ENCODE measurements at regions of chr5 and their contacts with region 1.

Region 1: DNA sequence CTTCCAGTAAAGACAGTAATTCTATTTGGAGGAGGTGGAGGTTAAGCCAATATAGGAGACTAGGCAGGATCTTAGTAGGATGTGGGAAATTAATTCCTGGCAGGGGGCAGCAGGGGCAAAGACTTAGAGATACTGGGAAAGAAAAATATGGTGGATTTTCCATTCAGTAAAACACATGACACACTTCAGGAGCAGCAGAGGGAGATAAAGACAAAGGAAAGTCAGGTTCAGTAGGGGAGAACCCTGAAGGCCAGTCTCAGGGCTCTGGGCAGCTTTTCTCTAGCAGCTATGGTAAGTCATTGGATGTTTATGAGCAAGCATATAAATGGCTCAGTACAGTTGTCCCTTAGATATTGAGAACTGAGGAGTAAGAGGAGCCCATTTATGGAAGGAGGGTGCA is 105.5 kb downstream of the PJA2 start:
- DNase-seq: no peak
- H3K4me3 ChIP-seq: no peak overlapping the region
- H3K27ac ChIP-seq: no peak overlapping the region
- H3K4me1 ChIP-seq: no peaks in the 10 kb centered on the region
- H3K27me3 ChIP-seq: peaks cover 2% of the 10 kb centered on the region
- CTCF ChIP-seq: no peak

Region 2: GRCh38 chr5:109230369-109230768 is 73.9 kb before region 1 on chr5:
- CTCF ChIA-PET with region 1: no interaction called
- dilution Hi-C with region 1: loop called (anchors 5 kb)
- in situ Hi-C with region 1: no loop called
- intact Hi-C with region 1: no loop called
- DNase-seq: no peak
- H3K4me3 ChIP-seq: no peak overlapping the region
- H3K27ac ChIP-seq: no peak overlapping the region
- H3K4me1 ChIP-seq: no peaks in the 10 kb centered on the region
- H3K27me3 ChIP-seq: no peaks in the 10 kb centered on the region
- CTCF ChIP-seq: no peak

Region 3: DNA sequence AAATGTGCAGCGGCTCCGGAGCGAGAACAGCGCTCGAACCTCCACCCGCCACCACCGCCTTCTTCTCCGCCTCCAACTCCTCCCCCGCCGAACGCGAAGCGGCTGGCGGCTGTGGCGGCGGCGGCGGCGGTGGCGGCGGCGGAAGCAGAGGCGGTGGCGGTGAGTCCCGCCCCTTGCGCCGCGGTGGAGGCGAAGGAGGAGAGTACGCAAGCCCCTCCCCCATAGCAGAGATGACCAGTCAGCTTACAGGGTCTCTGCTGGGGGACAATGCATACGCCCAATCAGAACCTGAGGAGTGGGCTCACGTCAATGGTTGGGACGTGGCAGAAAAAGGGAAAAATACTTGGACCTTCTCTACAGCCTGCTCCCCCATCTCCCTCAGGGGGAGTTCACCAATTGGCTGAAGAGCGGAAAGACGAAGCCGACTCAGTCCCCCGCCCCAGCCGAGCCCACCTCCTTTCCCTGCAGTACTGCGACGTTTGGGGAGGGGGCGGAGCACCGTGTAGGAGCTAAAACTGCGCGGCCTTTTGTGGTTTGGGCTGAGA is 105.6 kb after region 1 on chr5 and contains the start of gene PJA2:
- CTCF ChIA-PET with region 1: no interaction called
- dilution Hi-C with region 1: no loop called
- in situ Hi-C with region 1: no loop called
- intact Hi-C with region 1: no loop called
- DNase-seq: peak; percentile 99
- H3K4me3 ChIP-seq: peak within 1 kb of the TSS; percentile 60 to 95 (median 95)
- H3K27ac ChIP-seq: peak within 1 kb of the TSS; percentile 97
- H3K4me1 ChIP-seq: peaks cover 21% of the 10 kb centered on the region
- H3K27me3 ChIP-seq: no peaks in the 10 kb centered on the region
- CTCF ChIP-seq: peak in 1 of 2 donors; percentile 36
- total RNA-seq, gene PJA2: 40.3 to 64.5 TPM